ENCODE measurements at regions of chr11 and their contacts with region 1.

Region 1: DNA sequence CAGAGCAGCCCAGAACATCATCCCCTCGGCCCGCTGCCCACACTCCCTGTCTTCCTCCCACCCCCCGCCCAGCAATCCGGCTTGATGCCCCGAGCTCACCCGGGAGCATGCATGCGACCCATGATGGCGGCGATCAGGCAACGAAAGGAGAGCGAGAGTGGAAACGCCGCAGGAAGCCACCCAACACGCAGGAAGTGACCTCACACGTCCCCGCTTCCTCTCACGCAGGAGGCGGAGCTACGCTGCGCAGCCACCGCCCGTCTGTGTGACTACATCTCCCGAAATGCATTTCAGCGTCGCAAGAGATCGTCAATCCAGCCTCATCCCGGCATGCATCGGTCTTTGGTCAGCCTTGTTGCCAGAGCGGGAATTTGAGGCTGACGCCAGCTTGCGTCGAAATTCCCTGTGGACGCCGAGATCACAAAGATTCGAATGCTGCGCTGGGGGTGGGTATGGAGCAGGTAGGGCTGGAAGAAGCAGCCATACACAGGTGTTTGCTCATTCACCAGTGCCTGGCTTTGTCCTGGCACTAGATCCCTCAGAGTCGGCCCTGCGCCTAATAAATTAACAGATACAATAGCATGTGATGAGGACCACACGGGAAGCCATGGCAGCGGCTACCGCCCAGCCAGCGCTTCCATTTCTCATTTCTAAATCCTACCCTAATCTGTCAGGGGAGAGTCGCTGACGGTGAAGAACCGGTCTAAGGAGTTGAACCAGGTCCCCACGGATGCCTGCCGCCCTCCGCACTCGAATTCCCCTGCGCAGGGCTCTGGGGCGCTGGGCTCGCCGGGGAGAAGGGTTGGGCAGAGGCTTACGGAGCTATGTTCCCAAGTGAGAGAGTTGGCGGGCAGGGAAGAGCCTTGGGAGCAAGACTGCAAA is at the start of gene RPS13:
- DNase-seq: peak; percentile 90 to 96 (median 94)
- H3K4me3 ChIP-seq: peak within 1 kb of the TSS; percentile 93 to 94
- H3K4me3 Mint-ChIP-seq: peak within 1 kb of the TSS; percentile 95 to 99 (median 99)
- H3K27ac ChIP-seq: peak within 1 kb of the TSS; percentile 87
- H3K27ac Mint-ChIP-seq: peak within 1 kb of the TSS; percentile 96 to 99 (median 98)
- H3K4me1 ChIP-seq: peaks cover 39% of the 10 kb centered on the region
- H3K4me1 Mint-ChIP-seq: peaks cover 17 to 53% (median 38%) of the 10 kb centered on the region in 4 donors
- H3K27me3 ChIP-seq: no peaks in the 10 kb centered on the region
- H3K27me3 Mint-ChIP-seq: no peaks in the 10 kb centered on the region
- total RNA-seq, gene RPS13: 2,047 to 2,133 TPM

Region 2: DNA sequence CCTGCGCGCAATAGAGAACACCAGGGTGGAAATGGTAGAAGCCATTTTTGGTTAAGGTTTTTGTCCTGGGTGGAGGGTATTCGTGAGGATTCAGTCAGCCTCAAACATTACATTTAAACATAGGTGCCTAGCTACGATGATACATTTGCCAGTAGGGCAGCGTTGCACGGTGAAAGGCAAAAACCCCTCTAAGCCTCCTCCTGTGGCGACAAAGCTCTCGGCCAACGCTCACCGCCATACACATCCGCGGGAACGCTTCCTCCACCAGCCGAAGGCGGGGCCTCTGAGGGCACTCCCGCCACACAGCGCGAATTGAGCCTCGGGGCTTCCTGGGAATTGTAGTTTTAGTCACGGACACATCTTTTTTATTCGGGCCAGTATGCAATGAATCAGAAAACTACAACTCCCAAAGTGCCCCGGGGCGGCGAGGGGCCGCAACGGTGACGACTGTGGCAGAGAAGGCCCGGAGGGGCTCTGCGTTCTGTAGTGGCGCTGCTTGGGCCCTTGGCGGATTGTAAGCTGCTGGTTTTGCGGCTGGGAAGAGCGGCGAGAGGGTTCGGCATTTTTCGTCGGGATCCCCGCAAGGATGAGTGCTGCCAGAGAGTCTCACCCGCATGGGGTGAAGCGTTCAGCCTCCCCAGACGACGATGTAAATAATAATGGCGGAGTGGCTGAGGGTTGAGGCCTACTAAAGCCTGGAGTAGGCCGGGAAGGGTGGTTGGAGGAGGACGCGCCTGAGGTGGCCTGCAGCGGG is 339.4 kb before region 1 on chr11 and contains the start of gene C11orf58:
- CTCF ChIA-PET with region 1: no interaction called
- POLR2A ChIA-PET with region 1: interaction called, 31 read pairs
- intact Hi-C with region 1: loop called (anchors 1 kb)
- DNase-seq: peak; percentile 97 to 98 (median 98)
- H3K4me3 ChIP-seq: peak within 1 kb of the TSS; percentile 70 to 98
- H3K4me3 Mint-ChIP-seq: peak within 1 kb of the TSS in 5 of 8 donors; percentile 58 to 84 (median 72)
- H3K27ac ChIP-seq: peak within 1 kb of the TSS; percentile 99
- H3K27ac Mint-ChIP-seq: peak within 1 kb of the TSS in 5 of 7 donors; percentile 86 to 94 (median 90)
- H3K4me1 ChIP-seq: peaks cover 41% of the 10 kb centered on the region
- H3K4me1 Mint-ChIP-seq: peaks cover 17 to 32% (median 23%) of the 10 kb centered on the region in 4 donors
- H3K27me3 ChIP-seq: no peaks in the 10 kb centered on the region
- H3K27me3 Mint-ChIP-seq: no peaks in the 10 kb centered on the region
- total RNA-seq, gene C11orf58: 145 to 148 TPM

Region 3: DNA sequence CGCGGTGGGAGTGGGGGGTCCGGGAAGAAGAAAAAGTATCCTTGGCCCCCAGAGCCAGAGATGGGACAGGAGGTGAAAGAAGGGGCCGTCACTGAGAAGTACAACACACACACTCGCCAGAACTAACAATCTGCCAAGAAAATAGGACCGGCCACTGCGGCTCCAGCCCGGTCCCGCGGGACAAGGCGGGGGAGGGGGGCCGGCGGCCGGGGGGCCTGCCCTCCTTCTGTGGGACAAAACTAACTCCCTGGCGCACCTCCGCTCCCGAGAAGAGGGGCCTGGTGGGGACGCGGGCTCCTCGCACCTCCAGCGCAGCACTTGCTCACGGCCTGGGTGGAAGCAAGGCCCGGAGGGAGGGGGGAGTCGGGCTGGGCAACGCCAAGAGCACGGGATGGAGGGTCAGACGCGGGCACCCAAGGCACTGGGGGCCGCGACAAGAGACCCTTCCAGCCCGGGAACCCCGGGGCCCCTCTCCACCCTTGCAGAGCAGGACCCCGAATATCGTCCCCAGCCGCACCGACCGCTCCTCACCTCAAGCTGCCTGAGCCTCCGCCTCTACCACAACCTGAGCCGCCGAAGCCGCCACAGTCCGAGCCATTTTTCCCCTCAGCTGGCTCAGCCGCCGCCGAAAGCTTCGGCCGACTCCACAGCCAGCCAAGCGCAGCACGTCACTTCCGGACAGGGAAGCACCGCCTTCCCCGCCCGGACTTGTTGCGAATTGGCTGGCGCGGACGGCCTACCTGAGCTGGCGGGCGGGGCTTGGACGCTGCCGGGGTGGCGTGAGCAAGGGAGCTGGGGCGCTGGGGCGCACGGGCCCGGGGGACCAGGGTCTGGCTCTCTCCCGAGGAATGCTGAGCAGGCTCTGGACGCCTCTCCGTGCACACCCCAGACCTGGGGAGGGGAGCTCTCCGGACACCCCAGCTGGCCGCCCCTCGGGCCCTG is 129.8 kb after region 1 on chr11 and contains the start of gene PIK3C2A:
- CTCF ChIA-PET with region 1: interaction called, 3 read pairs
- POLR2A ChIA-PET with region 1: interaction called, 15 read pairs
- intact Hi-C with region 1: loop called (anchors 1 kb)
- DNase-seq: peak; percentile 90 to 94 (median 91)
- H3K4me3 ChIP-seq: peak within 1 kb of the TSS; percentile 70 to 79
- H3K4me3 Mint-ChIP-seq: peak within 1 kb of the TSS; percentile 95 to 100 (median 99)
- H3K27ac ChIP-seq: peak within 1 kb of the TSS; percentile 80
- H3K27ac Mint-ChIP-seq: peak within 1 kb of the TSS; percentile 75 to 100 (median 98)
- H3K4me1 ChIP-seq: peaks cover 25% of the 10 kb centered on the region
- H3K4me1 Mint-ChIP-seq: peaks cover 15 to 48% (median 35%) of the 10 kb centered on the region in 4 donors
- H3K27me3 ChIP-seq: no peaks in the 10 kb centered on the region
- H3K27me3 Mint-ChIP-seq: no peaks in the 10 kb centered on the region
- total RNA-seq, gene PIK3C2A: 32.0 to 40.4 TPM

Region 4: DNA sequence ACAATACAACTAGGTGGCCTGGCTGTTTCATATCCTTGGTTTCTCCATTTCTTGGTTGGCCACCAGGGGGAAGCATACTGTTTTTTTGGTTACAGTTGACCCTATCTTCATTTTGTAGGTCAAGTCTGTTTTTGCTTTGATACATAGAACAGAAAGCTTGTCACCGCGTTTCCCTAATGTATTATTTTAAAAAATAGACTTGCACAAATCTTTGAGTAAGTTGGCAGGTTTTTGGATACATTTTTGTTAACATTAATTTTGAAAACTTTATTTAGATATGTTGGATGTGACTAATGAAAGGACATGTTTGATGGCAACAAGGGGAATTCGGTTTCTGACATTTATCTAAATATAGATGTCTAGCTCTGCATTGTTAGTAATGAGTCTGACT is 276.8 kb after region 1 on chr11:
- CTCF ChIA-PET with region 1: no interaction called
- POLR2A ChIA-PET with region 1: interaction called, 4 read pairs
- intact Hi-C with region 1: loop called (anchors 5 kb)
- DNase-seq: peak; percentile 62 to 71 (median 65)
- H3K4me3 ChIP-seq: no peak overlapping the region
- H3K4me3 Mint-ChIP-seq: peak overlapping the region in 7 of 8 donors; percentile 74 to 98 (median 94)
- H3K27ac ChIP-seq: no peak overlapping the region
- H3K27ac Mint-ChIP-seq: peak overlapping the region in 5 of 7 donors; percentile 22 to 76 (median 64)
- H3K4me1 ChIP-seq: peaks cover 29% of the 10 kb centered on the region
- H3K4me1 Mint-ChIP-seq: peaks cover 17 to 44% (median 28%) of the 10 kb centered on the region in 4 donors
- H3K27me3 ChIP-seq: no peaks in the 10 kb centered on the region
- H3K27me3 Mint-ChIP-seq: peaks cover 0 to 1% of the 10 kb centered on the region in 2 donors

Region 5: GRCh38 chr11:18012863-18013781 is 935.4 kb after region 1 on chr11 and contains the start of gene SERGEF:
- CTCF ChIA-PET with region 1: no interaction called
- POLR2A ChIA-PET with region 1: no interaction called
- intact Hi-C with region 1: loop called (anchors 5 kb)
- DNase-seq: peak; percentile 91 to 92 (median 91)
- H3K4me3 ChIP-seq: peak within 1 kb of the TSS; percentile 72 to 94
- H3K4me3 Mint-ChIP-seq: peak within 1 kb of the TSS; percentile 93 to 99 (median 96)
- H3K27ac ChIP-seq: peak within 1 kb of the TSS; percentile 73
- H3K27ac Mint-ChIP-seq: peak within 1 kb of the TSS; percentile 94 to 100 (median 98)
- H3K4me1 ChIP-seq: peaks cover 19% of the 10 kb centered on the region
- H3K4me1 Mint-ChIP-seq: peaks cover 18 to 41% (median 26%) of the 10 kb centered on the region in 4 donors
- H3K27me3 ChIP-seq: no peaks in the 10 kb centered on the region
- H3K27me3 Mint-ChIP-seq: no peaks in the 10 kb centered on the region
- total RNA-seq, gene SERGEF: 46.2 to 54.1 TPM

Measured in CD4-positive, alpha-beta memory T cell (primary cell).